ENCODE measurements at regions of chr17 and their contacts with region 1.

Region 1: GRCh38 chr17:51933647-51934046 is 224.9 kb downstream of the CA10 start:
- DNase-seq: no peak
- H3K4me3 ChIP-seq: no peak overlapping the region
- H3K27ac ChIP-seq: no peak overlapping the region
- H3K4me1 ChIP-seq: no peaks in the 10 kb centered on the region
- H3K27me3 ChIP-seq: peaks cover 3% of the 10 kb centered on the region
- CTCF ChIP-seq: no peak

Region 2: DNA sequence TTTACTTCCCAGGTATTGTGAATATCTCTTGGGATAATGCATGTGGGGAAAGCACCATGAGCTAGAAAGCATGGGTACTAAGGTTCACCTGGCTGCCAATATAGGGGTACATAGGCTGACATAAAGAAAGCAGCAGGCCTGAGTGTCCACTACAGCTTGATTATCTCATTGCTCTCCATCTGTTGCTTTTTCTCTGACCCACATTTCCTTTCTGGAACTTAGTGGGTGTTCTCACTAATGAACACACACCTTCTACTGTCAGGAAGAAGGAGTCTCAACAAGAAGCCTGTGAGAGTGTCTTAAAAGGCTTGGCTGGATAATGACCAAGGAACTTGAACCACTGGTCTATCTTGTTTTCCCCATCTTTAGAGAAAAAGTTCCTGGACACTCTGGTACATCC is 162.4 kb after region 1 on chr17:
- CTCF ChIA-PET with region 1: no interaction called
- POLR2A ChIA-PET with region 1: no interaction called
- intact Hi-C with region 1: loop called (anchors 10 kb)
- DNase-seq: no peak
- H3K4me3 ChIP-seq: no peak overlapping the region
- H3K27ac ChIP-seq: no peak overlapping the region
- H3K4me1 ChIP-seq: no peaks in the 10 kb centered on the region
- H3K27me3 ChIP-seq: no peaks in the 10 kb centered on the region
- CTCF ChIP-seq: no peak

Measured in A673 (cell line).